Naive thymus-derived CD4-positive, alpha-beta T cell (primary cell): ENCODE measurements at regions of chr6 and their contacts with region 1.

Region 1: GRCh38 chr6:131231103-131231502 is 95.8 kb downstream of the AKAP7 start:
- DNase-seq: no peak
- ATAC-seq: no peak
- H3K4me3 ChIP-seq: no peak overlapping the region
- H3K4me3 Mint-ChIP-seq: no peak overlapping the region
- H3K27ac ChIP-seq: no peak overlapping the region
- H3K27ac Mint-ChIP-seq: peak overlapping the region in 1 of 9 donors; percentile 43
- H3K4me1 ChIP-seq: no peaks in the 10 kb centered on the region
- H3K4me1 Mint-ChIP-seq: peaks cover 1 to 54% (median 36%) of the 10 kb centered on the region in 7 donors
- H3K27me3 ChIP-seq: no peaks in the 10 kb centered on the region
- H3K27me3 Mint-ChIP-seq: no peaks in the 10 kb centered on the region

Region 2: GRCh38 chr6:131213501-131213990 is 17.6 kb before region 1 on chr6:
- CTCF ChIA-PET with region 1: no interaction called
- POLR2A ChIA-PET with region 1: interaction called, 7 read pairs
- intact Hi-C with region 1: loop called in 1 of 2 experiments (anchors 2 kb)
- DNase-seq: no peak
- ATAC-seq: peak; percentile 37
- H3K4me3 ChIP-seq: no peak overlapping the region
- H3K4me3 Mint-ChIP-seq: peak overlapping the region in 9 of 10 donors; percentile 4 to 66 (median 22)
- H3K27ac ChIP-seq: no peak overlapping the region
- H3K27ac Mint-ChIP-seq: peak overlapping the region in 8 of 9 donors; percentile 3 to 78 (median 49)
- H3K4me1 ChIP-seq: peaks cover 0 to 17% of the 10 kb centered on the region in 2 donors
- H3K4me1 Mint-ChIP-seq: peaks cover 18 to 71% (median 57%) of the 10 kb centered on the region in 7 donors
- H3K27me3 ChIP-seq: no peaks in the 10 kb centered on the region
- H3K27me3 Mint-ChIP-seq: no peaks in the 10 kb centered on the region

Region 3: DNA sequence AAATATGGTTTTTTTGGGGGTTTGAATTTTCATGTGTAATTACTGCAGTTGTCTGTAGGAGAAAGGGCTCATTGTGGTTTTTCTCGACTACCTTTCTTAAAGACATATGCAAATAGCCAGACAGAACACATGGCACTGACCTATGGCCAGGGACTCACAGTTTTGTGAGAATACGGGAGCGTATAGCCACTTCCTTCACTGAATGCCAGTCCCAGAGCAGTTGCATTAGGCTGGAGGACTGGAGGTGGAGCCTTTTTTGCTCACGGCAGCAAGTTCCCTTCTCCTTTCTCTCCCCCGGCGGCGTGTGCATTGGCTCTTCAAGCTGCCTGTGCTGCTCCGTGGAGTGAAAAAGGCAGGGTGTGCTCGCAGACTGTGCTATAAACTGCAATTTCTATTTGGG is 19.0 kb after region 1 on chr6:
- CTCF ChIA-PET with region 1: no interaction called
- POLR2A ChIA-PET with region 1: no interaction called
- intact Hi-C with region 1: loop called in 1 of 2 experiments (anchors 2 kb)
- DNase-seq: peak in 7 of 9 donors; percentile 9 to 44 (median 19)
- ATAC-seq: peak; percentile 86
- H3K4me3 ChIP-seq: peak overlapping the region; percentile 25
- H3K4me3 Mint-ChIP-seq: peak overlapping the region in 9 of 10 donors; percentile 70 to 88 (median 79)
- H3K27ac ChIP-seq: peak overlapping the region; percentile 27
- H3K27ac Mint-ChIP-seq: peak overlapping the region in 8 of 9 donors; percentile 5 to 84 (median 46)
- H3K4me1 ChIP-seq: peaks cover 5 to 19% of the 10 kb centered on the region in 2 donors
- H3K4me1 Mint-ChIP-seq: peaks cover 18 to 71% (median 50%) of the 10 kb centered on the region in 7 donors
- H3K27me3 ChIP-seq: no peaks in the 10 kb centered on the region
- H3K27me3 Mint-ChIP-seq: no peaks in the 10 kb centered on the region